ENCODE measurements at regions of chr1 and their contacts with region 1.

Region 1: GRCh38 chr1:55337801-55338447 is 122.8 kb upstream of the USP24 start:
- DNase-seq: peak; percentile 25
- H3K4me3 Mint-ChIP-seq: no peak overlapping the region
- H3K27ac Mint-ChIP-seq: no peak overlapping the region
- H3K4me1 Mint-ChIP-seq: no peaks in the 10 kb centered on the region
- H3K27me3 Mint-ChIP-seq: peaks cover 2% of the 10 kb centered on the region

Region 2: DNA sequence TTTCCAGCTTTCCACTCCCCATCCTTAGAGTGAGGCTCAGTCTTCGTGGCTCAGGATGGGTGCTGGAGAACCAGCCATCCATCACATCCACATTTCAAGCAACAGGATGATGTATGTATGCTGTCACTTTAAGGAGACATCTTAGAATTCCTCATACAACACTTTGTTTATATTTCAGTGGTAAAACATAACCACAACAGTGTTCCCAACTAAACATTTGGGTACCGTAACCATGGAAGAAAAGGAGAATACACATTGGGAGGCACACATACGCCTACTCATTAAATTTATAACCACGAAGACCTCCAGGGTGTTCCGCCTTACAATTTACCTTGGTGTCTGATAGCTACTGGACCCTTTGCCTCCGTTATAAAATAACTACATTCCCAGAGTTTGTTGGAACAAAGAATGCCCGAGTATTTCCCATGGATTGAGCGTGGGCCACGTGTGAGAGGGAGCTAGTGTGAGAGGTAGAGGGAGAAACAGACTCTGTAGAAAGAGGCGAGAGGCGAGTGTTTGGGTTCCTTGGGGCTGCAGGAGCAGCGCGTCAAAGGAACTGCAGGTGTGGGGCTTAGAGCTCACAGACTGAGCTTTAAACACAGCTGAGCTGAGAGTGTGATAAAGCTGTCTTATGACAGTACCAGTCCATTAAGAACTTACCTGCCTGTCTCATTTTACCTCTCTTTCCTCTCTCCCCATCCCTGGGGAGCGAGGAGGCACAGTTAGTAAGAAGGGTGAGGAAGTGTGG is 11.3 kb before region 1 on chr1:
- CTCF ChIA-PET with region 1: interaction called, 11 read pairs
- POLR2A ChIA-PET with region 1: no interaction called
- intact Hi-C with region 1: no loop called
- DNase-seq: no peak
- H3K4me3 Mint-ChIP-seq: no peak overlapping the region
- H3K27ac Mint-ChIP-seq: no peak overlapping the region
- H3K4me1 Mint-ChIP-seq: no peaks in the 10 kb centered on the region
- H3K27me3 Mint-ChIP-seq: peaks cover 11% of the 10 kb centered on the region